Posterior vena cava (tissue), 2 donors: ENCODE measurements at regions of chr17 and their contacts with region 1.

Region 1: DNA sequence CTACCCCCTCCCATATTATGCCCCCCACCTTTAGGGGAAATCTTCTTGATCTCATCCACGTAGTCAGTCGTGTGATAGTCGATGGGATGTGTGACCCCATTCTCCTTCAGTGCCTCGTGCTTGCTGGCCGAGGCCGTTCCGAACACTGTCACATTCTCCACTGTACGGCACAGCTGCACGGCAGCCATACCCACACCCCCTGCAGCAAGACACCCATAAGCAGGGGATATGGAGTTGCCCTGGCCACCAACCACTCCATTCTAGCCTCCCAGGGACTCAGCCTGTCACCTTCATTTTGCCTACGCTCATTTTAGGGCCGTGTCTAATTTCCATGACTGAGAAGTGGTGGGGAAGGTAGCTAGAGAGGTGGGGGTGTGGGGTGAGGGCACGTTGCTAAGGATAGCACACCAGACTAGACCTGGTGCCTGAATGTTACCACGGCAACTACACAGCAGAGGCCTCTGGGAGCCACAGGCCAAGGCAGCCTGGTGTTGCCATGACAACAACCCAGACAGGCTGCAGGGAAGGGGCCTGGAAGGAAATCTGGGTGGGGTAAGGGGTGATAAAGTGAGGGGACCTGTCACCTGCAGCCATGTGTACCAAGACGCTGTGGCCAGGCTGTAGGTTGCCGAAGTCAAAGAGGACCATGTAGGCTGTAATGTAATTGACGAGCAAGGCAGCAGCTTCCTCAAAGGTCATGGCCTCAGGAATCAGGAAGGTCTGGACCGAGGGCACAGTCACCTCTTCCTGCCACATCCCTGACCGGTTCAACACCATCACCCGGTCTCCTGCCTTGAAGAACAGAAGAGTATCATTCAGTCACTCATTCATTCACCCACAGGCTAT is 4.0 kb downstream of the VAT1 start:
- DNase-seq: no peak

Region 2: DNA sequence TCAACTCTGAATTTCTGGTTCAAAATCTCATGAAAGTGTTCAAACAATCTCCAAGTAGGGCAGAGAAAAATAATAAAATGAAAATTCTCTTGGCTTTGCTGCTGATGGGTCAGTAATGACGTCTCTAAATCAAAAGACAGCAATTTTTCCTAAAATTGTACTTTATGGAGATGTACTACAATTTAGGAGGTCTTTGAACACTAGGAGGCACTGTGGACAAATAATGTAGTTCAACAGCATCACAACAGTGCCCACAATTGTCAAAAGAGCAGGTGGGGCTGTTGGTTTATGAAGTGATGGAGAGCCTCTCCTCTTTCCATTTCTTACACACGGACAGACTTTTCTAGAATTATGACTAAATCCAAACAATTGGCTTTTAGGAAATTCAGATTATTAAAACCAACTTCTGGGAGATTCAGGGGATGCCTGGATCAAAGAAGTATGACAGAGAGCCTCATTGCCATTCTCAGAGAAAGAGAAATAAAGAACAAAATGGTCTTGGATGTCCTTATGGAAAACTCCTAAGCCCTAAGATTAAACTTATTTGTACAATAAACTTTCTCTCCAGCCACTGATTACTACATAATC is 297.1 kb before region 1 on chr17:
- intact Hi-C with region 1: no loop called
- DNase-seq: no peak

Region 3: DNA sequence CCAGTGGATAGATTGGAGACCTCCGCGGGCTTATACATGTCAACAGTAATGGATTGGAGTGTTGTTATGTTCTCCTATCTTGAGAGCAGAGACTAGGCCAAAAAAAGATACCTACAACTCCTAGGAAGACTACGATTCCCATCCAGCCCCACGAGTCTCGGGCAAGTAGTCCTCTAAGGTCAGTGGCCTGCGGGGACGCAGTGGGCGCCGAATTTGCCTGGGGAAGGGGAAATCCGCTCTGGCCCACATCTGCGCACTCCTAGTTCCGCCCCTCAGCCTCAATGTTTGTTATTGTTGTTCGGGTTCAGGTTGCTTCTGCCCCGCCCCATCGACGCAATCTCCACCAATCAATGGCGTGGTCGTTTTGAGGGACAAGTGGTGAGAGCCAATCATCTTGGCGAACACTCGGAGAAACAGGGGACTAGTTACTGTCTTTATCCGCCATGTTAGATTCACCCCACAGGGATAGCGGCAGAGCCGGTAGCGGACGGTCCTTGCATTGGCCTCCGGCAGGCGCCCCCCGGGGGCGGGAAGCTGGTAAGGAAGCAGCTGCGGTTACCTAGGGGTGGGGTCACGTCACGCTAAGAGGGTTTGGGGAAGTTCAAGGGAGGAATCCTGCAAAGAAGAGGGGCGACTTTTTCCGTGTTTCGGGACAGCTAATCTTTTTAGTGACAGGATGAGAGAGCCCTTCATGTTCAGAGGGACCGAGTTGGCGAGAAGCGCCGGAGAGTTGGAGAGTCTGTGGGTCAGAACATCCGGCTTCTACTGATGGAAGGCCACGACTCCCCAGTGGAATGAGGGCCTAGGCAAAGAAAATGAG is 152.7 kb after region 1 on chr17 and contains the start of gene NBR1:
- intact Hi-C with region 1: loop called (anchors 10 kb)
- DNase-seq: peak; percentile 97
- total RNA-seq, gene NBR1: 64.7 to 69.1 TPM